Endothelial cell of umbilical vein (primary cell): ENCODE measurements at regions of chr1 and their contacts with region 1.

Region 1: DNA sequence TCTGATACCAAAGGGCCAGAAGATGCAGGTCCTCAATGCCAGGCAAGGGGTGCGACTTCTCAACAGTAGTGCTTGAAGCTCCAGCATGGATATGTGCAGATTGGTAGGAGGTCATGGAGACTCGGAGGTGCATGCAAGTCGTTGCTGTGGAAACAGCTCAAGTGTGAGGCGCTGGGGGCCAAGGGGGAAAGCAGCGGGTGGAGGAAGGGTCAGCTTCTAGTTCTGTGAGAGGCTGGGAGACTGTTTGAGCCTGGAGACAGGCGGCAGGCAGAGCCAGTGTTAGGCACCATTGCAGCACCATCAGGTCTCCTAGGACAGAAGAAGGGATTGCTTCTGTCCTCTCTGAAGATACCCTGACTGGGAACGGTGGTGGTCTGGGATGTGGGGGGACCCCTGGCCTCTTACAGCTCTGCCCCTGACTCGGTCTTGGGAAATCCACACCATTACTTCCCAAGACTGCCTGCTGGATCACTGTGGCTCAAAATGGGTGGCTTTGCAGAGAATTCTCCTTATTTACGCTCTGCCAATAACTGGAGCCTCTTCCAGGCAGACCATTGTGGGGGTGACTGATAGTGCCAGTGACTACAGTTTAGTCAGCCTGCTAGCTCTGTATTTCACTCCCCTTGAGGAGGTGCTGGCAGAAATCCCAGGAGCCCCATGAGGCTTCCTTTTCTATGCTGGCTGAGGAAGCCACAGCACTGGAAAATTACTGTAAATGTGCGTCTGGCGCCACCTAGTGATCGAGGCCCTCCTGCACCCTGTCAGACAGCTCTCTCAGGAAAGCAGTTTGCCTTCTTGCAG is 46.3 kb upstream of the VANGL1 start:
- DNase-seq: peak; percentile 80
- H3K4me3 ChIP-seq: no peak overlapping the region
- H3K27ac ChIP-seq: no peak overlapping the region
- H3K4me1 ChIP-seq: no peaks in the 10 kb centered on the region
- H3K27me3 ChIP-seq: peaks cover 0 to 6% of the 10 kb centered on the region in 2 experiments
- CTCF ChIP-seq: peak; percentile 91 to 95
- POLR2A ChIP-seq: no peak

Region 2: DNA sequence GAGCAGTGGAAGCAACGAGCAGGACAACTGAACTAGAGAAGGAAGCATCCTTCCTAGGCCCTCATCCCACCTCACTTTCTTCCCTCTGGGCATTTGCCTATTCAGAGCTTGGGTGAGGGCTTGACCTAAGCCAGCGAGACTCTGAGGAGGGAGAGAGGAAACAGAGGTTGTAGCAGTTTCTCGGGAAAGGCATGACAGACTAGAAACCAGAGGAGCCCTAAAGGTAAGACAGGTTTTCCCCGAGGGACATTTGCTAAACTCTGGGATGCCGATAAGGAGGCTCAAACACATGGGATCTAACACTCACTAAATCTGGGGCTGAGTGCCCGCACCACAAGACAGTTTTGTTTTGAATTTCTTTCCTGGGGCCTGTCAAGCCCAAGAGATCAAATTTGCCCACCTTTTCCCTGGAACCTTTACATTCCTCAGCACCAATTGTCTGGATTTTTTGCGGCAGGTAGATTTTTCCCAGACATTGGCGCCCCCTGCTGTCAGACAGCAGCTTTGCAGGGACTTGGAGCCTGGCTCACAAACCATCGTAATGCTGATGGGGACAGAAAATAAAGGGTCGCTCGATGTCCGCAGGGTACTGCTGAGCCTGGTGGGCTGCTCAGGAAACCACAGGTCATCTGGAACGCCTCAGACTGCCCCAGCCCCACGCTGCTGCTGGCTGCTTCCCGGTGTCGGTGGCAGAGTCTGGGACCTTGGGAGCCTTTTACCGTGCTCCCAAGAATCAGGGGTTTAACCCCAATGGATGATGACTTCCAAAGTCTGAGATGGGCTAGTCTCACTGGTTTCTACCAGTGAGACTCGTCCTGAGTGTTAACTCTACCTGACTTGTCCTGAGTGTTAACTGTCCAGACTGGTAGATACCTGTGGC is 482.7 kb before region 1 on chr1:
- CTCF ChIA-PET with region 1: interaction called, 13 read pairs
- POLR2A ChIA-PET with region 1: no interaction called
- dilution Hi-C with region 1: no loop called
- intact Hi-C with region 1: no loop called
- DNase-seq: peak; percentile 25
- H3K4me3 ChIP-seq: no peak overlapping the region
- H3K27ac ChIP-seq: no peak overlapping the region
- H3K4me1 ChIP-seq: no peaks in the 10 kb centered on the region
- H3K27me3 ChIP-seq: no peaks in the 10 kb centered on the region
- CTCF ChIP-seq: peak; percentile 86 to 88
- POLR2A ChIP-seq: no peak

Region 3: GRCh38 chr1:115275212-115275611 is 320.3 kb before region 1 on chr1:
- CTCF ChIA-PET with region 1: interaction called, 10 read pairs
- POLR2A ChIA-PET with region 1: no interaction called
- dilution Hi-C with region 1: no loop called
- intact Hi-C with region 1: loop called (anchors 5 kb)
- DNase-seq: peak; percentile 14
- H3K4me3 ChIP-seq: no peak overlapping the region
- H3K27ac ChIP-seq: no peak overlapping the region
- H3K4me1 ChIP-seq: no peaks in the 10 kb centered on the region
- H3K27me3 ChIP-seq: no peaks in the 10 kb centered on the region
- CTCF ChIP-seq: peak; percentile 24 to 40
- POLR2A ChIP-seq: no peak

Region 4: DNA sequence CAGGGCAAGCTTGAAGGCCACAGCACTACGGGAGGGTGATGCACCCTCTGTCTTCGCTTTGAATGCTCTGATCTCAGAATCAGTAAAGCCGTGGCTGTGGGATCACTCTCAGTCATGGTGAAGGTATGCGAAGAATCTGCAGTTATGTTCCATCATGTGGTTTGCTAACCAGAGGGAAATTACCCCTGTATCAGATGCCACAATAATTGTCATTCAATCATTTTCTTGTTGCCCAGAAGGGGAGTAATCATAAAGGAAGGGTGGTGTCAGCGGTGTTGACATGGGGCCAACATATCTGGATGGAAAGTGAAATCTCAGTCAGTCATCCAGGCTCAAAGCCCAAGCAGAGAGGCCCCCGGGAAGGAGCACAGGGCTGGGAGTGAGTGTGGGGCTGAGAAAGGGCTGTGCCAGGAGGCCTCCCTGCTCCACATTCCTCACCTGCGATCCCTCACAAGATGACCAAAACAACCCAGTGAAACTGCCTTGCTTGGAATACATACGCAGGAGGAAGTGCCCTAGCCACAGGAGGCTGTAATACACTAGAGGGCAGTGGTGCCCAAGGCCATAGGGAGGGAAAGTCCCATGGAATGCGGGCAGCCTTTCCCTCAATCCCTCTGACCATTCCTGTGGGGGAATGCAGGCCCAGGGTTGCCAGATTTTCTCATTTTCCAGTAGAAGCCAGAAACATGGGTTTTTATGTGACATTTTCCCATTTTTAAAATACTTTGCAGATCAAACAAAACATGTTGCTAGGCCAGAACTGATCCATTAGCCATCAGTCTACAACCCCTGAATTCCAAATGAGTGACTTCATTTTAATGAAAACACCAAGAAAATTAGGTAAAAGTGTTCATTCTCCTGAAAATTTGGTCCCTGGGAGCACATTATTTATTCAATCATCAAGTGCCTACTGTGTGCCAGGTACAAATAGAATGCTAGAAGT is 49.4 kb before region 1 on chr1:
- CTCF ChIA-PET with region 1: interaction called, 8 read pairs
- POLR2A ChIA-PET with region 1: no interaction called
- dilution Hi-C with region 1: no loop called
- intact Hi-C with region 1: loop called (anchors 1 kb)
- DNase-seq: peak; percentile 56
- H3K4me3 ChIP-seq: no peak overlapping the region
- H3K27ac ChIP-seq: peak overlapping the region; percentile 6
- H3K4me1 ChIP-seq: peaks cover 6% of the 10 kb centered on the region
- H3K27me3 ChIP-seq: peaks cover 0 to 2% of the 10 kb centered on the region in 2 experiments
- CTCF ChIP-seq: peak; percentile 54 to 61
- POLR2A ChIP-seq: no peak

Region 5: DNA sequence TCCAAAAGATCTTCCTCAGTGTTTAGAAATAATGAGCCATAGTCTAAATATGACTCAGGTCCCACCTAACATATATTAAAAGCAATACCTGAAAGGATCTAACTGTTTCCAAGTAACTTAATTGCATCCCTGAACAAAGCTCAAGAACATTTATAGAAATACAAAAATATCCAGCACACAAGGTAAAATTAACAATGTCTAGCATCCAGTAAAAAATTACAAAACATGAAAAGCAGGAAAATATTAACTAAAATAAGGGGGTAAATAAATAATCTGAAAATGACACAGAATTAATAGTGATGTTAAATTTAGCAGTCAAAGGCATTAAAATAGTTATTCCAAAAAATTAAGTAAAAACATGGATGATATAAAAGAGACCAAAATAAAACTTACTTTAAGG is 25.0 kb after region 1 on chr1:
- CTCF ChIA-PET with region 1: no interaction called
- POLR2A ChIA-PET with region 1: no interaction called
- dilution Hi-C with region 1: no loop called
- intact Hi-C with region 1: no loop called
- DNase-seq: no peak
- H3K4me3 ChIP-seq: no peak overlapping the region
- H3K27ac ChIP-seq: no peak overlapping the region
- H3K4me1 ChIP-seq: no peaks in the 10 kb centered on the region
- H3K27me3 ChIP-seq: peaks cover 7% of the 10 kb centered on the region in 2 experiments
- CTCF ChIP-seq: no peak
- POLR2A ChIP-seq: no peak